Cardiac septum (tissue), 1 donor: ENCODE measurements at regions of chr19 and their contacts with region 1.

Region 1: DNA sequence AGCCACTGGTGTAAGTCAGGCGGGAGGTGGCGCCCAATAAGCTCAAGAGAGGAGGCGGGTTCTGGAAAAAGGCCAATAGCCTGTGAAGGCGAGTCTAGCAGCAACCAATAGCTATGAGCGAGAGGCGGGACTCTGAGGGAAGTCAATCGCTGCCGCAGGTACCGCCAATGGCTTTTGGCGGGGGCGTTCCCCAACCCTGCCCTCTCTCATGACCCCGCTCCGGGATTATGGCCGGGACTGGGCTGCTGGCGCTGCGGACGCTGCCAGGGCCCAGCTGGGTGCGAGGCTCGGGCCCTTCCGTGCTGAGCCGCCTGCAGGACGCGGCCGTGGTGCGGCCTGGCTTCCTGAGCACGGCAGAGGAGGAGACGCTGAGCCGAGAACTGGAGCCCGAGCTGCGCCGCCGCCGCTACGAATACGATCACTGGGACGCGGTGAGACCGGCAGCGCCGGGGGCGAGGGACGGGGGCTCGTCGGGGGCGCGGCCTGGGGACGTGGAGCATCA is at the start of gene ALKBH7:
- DNase-seq: peak; percentile 98
- total RNA-seq, gene ALKBH7: 130 TPM

Region 2: GRCh38 chr19:6393074-6393983 is 20.7 kb after region 1 on chr19 and contains the start of gene GTF2F1:
- intact Hi-C with region 1: loop called (anchors 2 kb)
- DNase-seq: peak; percentile 95
- total RNA-seq, gene GTF2F1: 30.9 TPM

Region 3: DNA sequence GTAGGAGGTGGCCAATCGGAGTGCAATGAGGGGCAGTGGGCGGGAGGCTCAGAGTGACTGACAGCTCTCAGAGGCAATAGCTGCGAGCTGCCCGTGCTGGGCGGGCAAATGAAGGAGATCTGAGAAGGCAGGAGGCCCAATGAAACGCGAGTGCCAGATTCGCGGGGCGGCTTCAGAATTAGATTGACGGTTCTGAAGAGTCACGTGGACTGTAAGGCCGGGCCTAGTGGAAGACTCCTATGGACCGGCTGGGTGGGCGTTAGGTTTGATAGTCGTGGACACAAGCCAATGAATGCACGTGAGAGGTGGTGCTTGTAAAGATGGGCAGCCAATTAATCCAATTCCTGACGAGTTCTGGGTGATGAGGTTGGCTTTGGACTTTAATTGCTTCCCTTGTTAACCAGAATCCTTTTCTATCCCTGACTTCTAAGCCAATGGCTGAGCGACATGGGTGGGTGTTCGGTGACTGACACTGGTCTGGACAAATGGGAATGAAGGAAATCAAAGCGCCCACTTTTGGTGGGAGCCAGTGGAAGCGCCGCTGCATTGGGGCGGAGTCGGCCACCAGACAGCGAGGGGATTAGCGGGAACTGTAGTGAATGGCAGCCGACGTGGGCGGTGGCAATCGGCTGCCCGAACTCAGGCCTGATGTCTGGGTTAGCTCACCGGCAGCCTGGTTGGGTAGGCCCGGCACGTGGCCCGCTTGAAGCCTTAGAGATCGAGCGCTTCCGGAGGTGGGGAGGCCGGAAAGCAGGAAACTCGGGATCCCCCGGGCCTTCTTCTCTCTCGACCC is 52.5 kb after region 1 on chr19:
- intact Hi-C with region 1: loop called (anchors 5 kb)
- DNase-seq: peak; percentile 100

Region 4: DNA sequence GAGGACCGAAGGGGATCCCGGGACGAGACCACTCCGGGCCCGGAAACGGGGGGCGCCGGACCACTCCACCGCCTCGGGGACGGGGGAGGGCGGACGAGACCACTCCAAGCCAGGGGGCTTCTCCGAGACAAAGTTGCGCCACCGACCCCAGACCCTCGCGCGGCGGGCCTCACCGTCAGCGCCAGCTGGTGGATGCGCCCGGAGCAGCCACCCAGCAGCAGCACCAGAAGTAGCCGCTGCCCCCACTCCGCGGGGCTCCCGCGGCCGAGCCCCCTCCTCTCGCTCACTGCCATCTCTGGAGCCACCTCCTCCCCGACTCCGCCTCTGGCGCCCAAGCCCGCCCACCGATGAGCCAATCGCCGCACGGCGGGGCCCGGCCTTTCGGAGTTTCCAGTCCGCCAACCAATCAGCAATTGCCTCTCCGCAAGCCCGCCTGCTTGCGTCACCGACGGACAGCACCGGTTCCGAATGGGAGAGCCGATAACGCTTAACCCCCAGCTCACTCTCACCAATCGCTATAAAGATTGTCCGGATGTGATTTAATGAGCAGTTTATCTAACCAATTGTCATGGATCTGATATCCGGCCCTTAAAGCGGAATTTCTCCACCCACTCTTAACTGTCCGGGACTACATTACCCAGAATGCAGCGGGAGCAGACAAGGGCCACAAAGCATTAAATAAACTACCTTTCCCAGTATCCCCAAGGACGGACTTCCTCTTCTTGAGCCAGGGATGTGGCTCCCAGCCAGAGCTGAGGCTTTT is 364.8 kb after region 1 on chr19 and contains the start of gene GPR108:
- intact Hi-C with region 1: loop called (anchors 2 kb)
- DNase-seq: peak; percentile 100
- total RNA-seq, gene GPR108: 22.5 TPM